BJ (cell line): ENCODE measurements at regions of chr1 and their contacts with region 1.

Region 1: DNA sequence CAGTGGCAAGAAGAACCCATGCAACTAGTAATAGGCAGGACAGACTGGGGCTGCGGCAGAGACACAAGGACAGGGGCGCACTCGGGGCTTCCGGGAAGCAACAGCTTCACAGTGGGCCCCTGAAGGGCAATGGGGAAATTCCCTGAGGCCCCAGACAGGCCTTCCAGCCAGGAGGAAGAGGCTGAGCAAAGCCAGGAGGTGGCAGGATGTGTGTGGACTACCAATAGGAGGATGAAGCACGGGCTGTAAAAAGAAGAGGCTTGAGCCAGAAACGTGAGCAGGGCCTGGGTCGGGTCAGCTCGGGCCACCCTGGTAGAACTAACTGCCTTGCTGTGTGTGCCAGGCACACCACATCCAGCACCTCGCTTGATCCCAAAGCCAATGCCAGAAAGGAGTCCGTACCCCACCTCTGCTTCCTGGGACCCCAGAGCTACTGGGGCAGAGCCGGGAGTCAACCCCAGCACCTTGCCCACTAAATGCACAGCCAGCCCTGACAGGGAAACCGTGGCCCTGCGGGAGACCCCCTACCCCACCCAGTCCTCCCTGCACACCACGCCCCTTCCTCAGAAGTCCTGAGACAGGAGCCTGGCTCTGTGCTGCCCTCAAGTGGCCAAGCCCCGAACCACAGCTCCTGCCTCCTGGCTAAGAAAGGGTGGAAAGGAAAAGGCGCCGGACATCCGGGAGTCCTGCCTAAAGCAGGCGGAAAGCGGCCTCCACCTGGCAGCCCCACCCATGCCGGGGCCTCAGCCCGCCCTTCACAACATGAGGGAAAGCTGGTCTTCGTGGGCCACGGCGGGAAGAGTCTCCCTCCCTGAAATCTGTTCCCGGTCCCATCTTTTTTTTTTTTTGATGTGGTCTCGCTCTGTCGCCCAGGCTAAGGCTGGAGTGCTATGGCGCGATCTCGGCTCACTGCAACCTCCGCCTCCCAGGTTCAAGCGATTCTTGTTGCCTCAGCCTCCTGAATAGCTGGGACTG is 33.7 kb downstream of the TTC39A start:
- DNase-seq: peak; percentile 15
- H3K4me3 ChIP-seq: peak overlapping the region; percentile 27
- H3K27me3 ChIP-seq: no peaks in the 10 kb centered on the region; the same call in 1 of the 2 replicates
- CTCF ChIP-seq: peak; percentile 99

Region 2: DNA sequence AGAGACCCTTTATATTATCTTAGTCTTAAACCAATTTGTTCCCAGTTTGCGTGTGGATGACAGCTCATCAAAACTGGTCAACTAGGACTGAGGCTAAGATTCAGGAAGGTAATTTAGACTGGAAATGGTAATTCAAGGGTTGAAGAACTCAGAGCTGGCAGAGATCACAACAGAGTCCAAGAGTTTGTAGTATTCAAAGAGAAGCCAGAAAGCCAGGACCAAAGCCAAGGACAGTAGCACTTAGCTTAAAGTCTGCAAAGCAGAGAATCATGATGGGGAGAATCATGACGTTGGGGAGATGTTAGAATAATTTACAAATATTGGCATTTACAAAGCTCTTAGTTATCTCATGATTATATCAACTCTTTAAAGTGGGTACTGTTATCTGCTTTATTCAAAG is 28.0 kb before region 1 on chr1:
- CTCF ChIA-PET with region 1: interaction called, 13 read pairs
- POLR2A ChIA-PET with region 1: no interaction called
- DNase-seq: no peak
- H3K4me3 ChIP-seq: no peak overlapping the region
- H3K27me3 ChIP-seq: no peaks in the 10 kb centered on the region
- CTCF ChIP-seq: no peak

Region 3: GRCh38 chr1:51280321-51280978 is 16.2 kb before region 1 on chr1:
- CTCF ChIA-PET with region 1: interaction called, 13 read pairs
- POLR2A ChIA-PET with region 1: no interaction called
- DNase-seq: no peak
- H3K4me3 ChIP-seq: no peak overlapping the region
- H3K27me3 ChIP-seq: no peaks in the 10 kb centered on the region
- CTCF ChIP-seq: no peak

Region 4: GRCh38 chr1:51329443-51330325 is 33.0 kb after region 1 on chr1:
- CTCF ChIA-PET with region 1: interaction called, 11 read pairs
- POLR2A ChIA-PET with region 1: no interaction called
- DNase-seq: no peak
- H3K4me3 ChIP-seq: no peak overlapping the region; the same call in 1 of the 2 replicates
- H3K27me3 ChIP-seq: no peaks in the 10 kb centered on the region
- CTCF ChIP-seq: no peak

Region 5: DNA sequence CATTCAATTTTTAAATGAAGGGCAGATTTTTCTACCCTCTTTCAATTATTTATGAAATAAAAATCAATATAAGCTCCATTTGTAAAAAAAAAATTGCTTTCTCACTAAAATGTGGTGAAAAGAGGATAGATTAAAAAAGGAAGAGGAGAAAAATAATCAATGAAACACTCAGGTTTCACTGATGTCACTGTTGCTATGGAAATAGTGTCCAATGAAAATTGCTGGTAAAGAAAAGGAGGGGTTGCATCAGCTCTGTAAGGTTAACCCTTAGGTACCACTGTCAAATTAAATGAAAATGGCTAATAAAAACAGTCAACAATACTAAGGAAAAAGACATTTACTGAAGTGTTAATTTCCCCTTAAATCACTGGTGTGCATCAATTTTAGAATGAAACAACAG is 125.3 kb after region 1 on chr1:
- CTCF ChIA-PET with region 1: no interaction called
- POLR2A ChIA-PET with region 1: no interaction called
- DNase-seq: peak; percentile 33
- H3K4me3 ChIP-seq: no peak overlapping the region
- H3K27me3 ChIP-seq: no peaks in the 10 kb centered on the region
- CTCF ChIP-seq: no peak